Aorta (tissue), 5 donors: ENCODE measurements at regions of chr17 and their contacts with region 1.

Region 1: DNA sequence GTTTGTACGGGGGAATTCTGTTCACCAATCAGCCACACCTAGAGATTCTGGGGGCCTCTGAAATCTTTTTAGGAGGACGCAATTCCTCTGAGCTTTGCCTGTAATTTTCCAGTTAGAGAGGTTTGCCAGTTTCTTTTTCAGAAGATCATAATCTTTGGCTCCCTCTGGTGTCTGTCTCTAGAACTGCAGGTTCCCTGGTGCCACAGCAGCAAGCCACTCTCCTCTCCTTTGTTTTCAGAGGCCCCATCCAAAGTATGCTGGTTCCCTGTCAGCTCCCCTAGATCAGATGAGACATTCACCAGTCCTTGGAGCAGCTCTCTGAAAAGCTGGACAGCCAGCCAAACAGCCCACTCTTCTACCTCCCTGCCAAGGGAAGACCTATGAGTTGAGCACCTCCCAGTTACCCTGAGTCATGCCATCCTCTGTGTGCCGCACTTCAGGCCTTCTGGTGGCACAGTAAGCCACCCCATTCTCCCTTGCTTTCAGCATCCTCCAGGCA is 36.1 kb downstream of the RNF112 start:
- DNase-seq: peak; percentile 64 to 80
- ATAC-seq: peak; percentile 90
- H3K4me3 ChIP-seq: no peak overlapping the region
- H3K27ac ChIP-seq: peak overlapping the region in 1 of 2 donors; percentile 92
- H3K4me1 ChIP-seq: peaks cover 0 to 5% of the 10 kb centered on the region in 2 donors
- H3K27me3 ChIP-seq: no peaks in the 10 kb centered on the region

Region 2: GRCh38 chr17:18921912-18922451 is 525.2 kb before region 1 on chr17:
- intact Hi-C with region 1: no loop called
- DNase-seq: no peak
- ATAC-seq: no peak
- H3K4me3 ChIP-seq: no peak overlapping the region
- H3K27ac ChIP-seq: no peak overlapping the region
- H3K4me1 ChIP-seq: no peaks in the 10 kb centered on the region
- H3K27me3 ChIP-seq: no peaks in the 10 kb centered on the region

Region 3: GRCh38 chr17:19377602-19378392 is 69.3 kb before region 1 on chr17:
- intact Hi-C with region 1: loop called in 1 of 2 experiments (anchors 5 kb)
- DNase-seq: peak; percentile 99
- ATAC-seq: peak; percentile 97
- H3K4me3 ChIP-seq: peak overlapping the region; percentile 38 to 43
- H3K27ac ChIP-seq: peak overlapping the region; percentile 54 to 83
- H3K4me1 ChIP-seq: peaks cover 0 to 3% of the 10 kb centered on the region in 2 donors
- H3K27me3 ChIP-seq: no peaks in the 10 kb centered on the region

Region 4: DNA sequence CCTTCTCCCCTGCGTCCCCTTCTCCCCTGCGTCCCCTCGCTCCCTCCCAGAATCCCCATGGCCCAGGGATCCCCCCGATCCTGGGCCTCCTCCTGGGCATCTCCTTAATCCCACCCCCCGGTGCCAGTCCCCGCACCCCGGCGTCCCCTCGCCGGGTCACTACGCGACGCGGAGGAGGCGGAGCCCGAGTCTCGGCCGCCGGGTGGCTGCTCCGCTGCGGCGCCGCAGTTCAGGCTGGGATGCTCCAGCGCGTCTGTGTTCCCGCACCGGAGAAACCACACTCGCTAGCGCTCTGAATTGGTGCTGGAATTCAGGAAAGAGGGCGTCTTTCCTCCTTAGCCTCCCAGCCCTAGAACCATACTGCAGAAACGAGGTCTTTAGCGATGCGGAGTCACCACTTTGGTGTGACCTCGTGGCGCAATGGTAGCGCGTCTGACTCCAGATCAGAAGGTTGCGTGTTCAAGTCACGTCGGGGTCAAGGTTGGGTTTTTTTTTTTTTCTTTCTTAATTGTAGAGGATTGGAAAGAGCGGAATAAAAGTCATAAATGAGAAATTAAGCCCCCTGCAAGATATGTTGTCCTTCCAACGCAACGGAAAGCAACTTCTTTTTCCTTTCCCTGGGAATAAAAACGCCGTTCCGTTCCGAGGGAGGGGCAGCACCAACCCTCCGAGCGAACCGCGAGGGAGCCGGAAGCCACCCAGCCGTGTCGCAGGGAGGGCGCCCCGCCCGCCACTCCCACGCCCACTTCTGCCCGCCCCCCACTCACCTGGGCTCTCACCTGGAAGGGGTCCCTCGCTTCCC is 60.8 kb after region 1 on chr17:
- intact Hi-C with region 1: loop called in 1 of 2 experiments (anchors 5 kb)
- DNase-seq: peak; percentile 89 to 95
- ATAC-seq: peak; percentile 95
- H3K4me3 ChIP-seq: peak overlapping the region; percentile 73 to 77
- H3K27ac ChIP-seq: peak overlapping the region; percentile 88 to 90
- H3K4me1 ChIP-seq: no peaks in the 10 kb centered on the region
- H3K27me3 ChIP-seq: no peaks in the 10 kb centered on the region